IMR-90 (cell line): ENCODE measurements at regions of chr1 and their contacts with region 1.

Region 1: GRCh38 chr1:119367427-119368124 is 1.0 kb upstream of the HAO2 start:
- DNase-seq: peak; percentile 45
- ATAC-seq: peak; percentile 77
- H3K4me3 ChIP-seq: no peak overlapping the region
- H3K27ac ChIP-seq: no peak overlapping the region
- H3K4me1 ChIP-seq: no peaks in the 10 kb centered on the region
- H3K27me3 ChIP-seq: peaks cover 8% of the 10 kb centered on the region
- CTCF ChIP-seq: peak; percentile 97
- POLR2A ChIP-seq: 0 out of 2 replicates have a peak, but pooled peaks have one; percentile 31
- RAD21 ChIP-seq: peak; percentile 96

Region 2: DNA sequence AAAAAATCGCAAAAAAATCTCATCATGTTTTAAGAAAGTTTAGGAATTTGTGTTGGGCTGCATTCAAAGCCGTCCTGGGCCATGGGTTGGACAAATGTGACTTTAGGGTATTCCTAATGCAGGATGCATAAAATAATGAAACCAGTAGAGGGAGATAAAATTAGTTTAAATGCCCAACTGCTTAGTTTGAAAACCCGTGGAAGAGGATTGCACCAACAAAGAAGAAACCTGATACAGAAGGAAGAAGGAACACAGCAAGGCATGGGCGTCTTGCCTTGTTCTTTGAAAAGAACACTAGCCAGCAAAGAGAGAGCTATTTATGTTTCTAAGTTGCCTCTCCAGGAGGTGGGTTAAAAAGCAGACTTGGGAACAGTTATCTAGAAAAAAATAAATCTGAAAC is 1400.1 kb before region 1 on chr1:
- CTCF ChIA-PET with region 1: no interaction called
- POLR2A ChIA-PET with region 1: no interaction called
- dilution Hi-C with region 1: no loop called
- in situ Hi-C with region 1: no loop called
- intact Hi-C with region 1: loop called (anchors 1 kb)
- DNase-seq: peak; percentile 65
- ATAC-seq: peak; percentile 91
- H3K4me3 ChIP-seq: no peak overlapping the region
- H3K27ac ChIP-seq: no peak overlapping the region
- H3K4me1 ChIP-seq: no peaks in the 10 kb centered on the region
- H3K27me3 ChIP-seq: no peaks in the 10 kb centered on the region; the same call in 1 of the 2 replicates
- CTCF ChIP-seq: peak; percentile 32
- POLR2A ChIP-seq: no peak
- RAD21 ChIP-seq: 0 out of 2 replicates have a peak, but pooled peaks have one; percentile 21

Region 3: GRCh38 chr1:119275145-119276134 is 92.1 kb before region 1 on chr1:
- CTCF ChIA-PET with region 1: no interaction called
- POLR2A ChIA-PET with region 1: no interaction called
- dilution Hi-C with region 1: no loop called
- in situ Hi-C with region 1: loop called (anchors 10 kb)
- intact Hi-C with region 1: loop called (anchors 1 kb)
- DNase-seq: peak; percentile 67
- ATAC-seq: peak; percentile 92
- H3K4me3 ChIP-seq: no peak overlapping the region
- H3K27ac ChIP-seq: no peak overlapping the region
- H3K4me1 ChIP-seq: peaks cover 4% of the 10 kb centered on the region
- H3K27me3 ChIP-seq: peaks cover 2% of the 10 kb centered on the region
- CTCF ChIP-seq: peak; percentile 91
- POLR2A ChIP-seq: no peak
- RAD21 ChIP-seq: peak; percentile 82

Region 4: GRCh38 chr1:119924948-119925898 is 557.6 kb after region 1 on chr1:
- CTCF ChIA-PET with region 1: no interaction called
- POLR2A ChIA-PET with region 1: no interaction called
- dilution Hi-C with region 1: no loop called
- in situ Hi-C with region 1: no loop called
- intact Hi-C with region 1: no loop called
- DNase-seq: no peak
- ATAC-seq: no peak
- H3K4me3 ChIP-seq: no peak overlapping the region
- H3K27ac ChIP-seq: no peak overlapping the region
- H3K4me1 ChIP-seq: no peaks in the 10 kb centered on the region
- H3K27me3 ChIP-seq: no peaks in the 10 kb centered on the region
- CTCF ChIP-seq: no peak
- POLR2A ChIP-seq: no peak
- RAD21 ChIP-seq: no peak